Activated T-helper 2 cell treated with anti-CD3 and anti-CD28 coated beads, Interferon-gamma antibody, Interleukin-2, Interleukin-4, amounts not matched to agents 10 μg/mL and 5 μg/mL and 100 μg/mL, durations not matched to agents 14 hours and 24 hours and 36 hours (primary cell): ENCODE measurements at regions of chr4 and their contacts with region 1.

Region 1: DNA sequence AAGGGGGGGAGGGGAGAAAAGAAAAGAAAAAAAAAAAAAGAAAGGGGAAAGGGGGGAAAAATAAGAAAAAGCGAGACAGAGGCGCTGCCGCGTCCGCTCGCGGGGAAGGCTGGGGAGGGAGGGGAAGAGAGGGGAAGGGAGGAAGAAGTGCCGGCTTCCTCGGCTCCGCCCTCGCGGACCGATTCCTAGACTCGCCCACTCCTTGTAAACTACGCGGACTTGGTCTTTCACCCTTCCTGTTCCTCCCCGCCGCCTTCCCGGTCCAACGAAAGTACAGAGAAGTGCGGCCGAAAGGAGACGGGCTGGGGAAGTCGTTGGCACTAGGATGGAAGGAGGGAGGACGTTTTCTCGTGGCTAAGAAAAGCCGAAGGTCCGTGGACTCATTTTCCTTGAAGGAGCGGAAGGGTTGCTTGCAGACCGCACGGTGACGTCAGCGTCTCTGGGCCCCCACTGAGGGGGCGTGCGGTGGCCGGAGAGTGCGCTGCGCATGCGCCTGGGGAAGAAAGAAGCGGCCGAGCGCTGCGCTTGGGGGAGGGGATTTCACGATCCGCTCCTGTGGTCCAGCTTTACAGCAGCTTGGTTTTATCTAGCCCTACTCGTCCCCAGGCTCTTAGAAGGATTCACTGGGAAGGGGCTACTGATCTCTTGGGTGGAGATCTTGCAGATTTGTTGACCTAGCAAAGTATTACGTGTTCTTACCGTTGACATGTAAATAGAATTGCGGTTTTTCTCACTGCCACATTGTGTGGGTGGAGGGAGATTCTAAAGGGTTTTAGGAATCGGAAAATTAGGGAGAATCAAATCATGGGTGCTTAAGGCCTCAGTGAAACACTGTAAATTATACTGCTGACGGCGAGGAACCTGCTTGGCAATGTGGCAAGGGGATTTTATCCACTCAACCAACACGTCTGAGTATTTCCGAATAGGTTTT is at the start of gene CCNI:
- DNase-seq: peak; percentile 92
- H3K4me3 Mint-ChIP-seq: peak within 1 kb of the TSS; percentile 94
- H3K27ac Mint-ChIP-seq: peak within 1 kb of the TSS; percentile 100
- H3K4me1 Mint-ChIP-seq: peaks cover 38% of the 10 kb centered on the region
- H3K27me3 Mint-ChIP-seq: no peaks in the 10 kb centered on the region
- total RNA-seq, gene CCNI: 321 and 330 TPM in 2 replicates

Region 2: GRCh38 chr4:75673027-75673958 is 1402.8 kb before region 1 on chr4 and contains the start of gene G3BP2:
- intact Hi-C with region 1: loop called (anchors 5 kb)
- DNase-seq: peak; percentile 97
- H3K4me3 Mint-ChIP-seq: peak within 1 kb of the TSS; percentile 99
- H3K27ac Mint-ChIP-seq: peak within 1 kb of the TSS; percentile 99
- H3K4me1 Mint-ChIP-seq: peaks cover 40% of the 10 kb centered on the region
- H3K27me3 Mint-ChIP-seq: no peaks in the 10 kb centered on the region
- total RNA-seq, gene G3BP2: 143 and 156 TPM in 2 replicates

Region 3: GRCh38 chr4:77031544-77031943 is 44.6 kb before region 1 on chr4:
- intact Hi-C with region 1: loop called (anchors 1 kb)
- DNase-seq: no peak
- H3K4me3 Mint-ChIP-seq: no peak overlapping the region
- H3K27ac Mint-ChIP-seq: no peak overlapping the region
- H3K4me1 Mint-ChIP-seq: peaks cover 40% of the 10 kb centered on the region
- H3K27me3 Mint-ChIP-seq: peaks cover 47% of the 10 kb centered on the region

Region 4: DNA sequence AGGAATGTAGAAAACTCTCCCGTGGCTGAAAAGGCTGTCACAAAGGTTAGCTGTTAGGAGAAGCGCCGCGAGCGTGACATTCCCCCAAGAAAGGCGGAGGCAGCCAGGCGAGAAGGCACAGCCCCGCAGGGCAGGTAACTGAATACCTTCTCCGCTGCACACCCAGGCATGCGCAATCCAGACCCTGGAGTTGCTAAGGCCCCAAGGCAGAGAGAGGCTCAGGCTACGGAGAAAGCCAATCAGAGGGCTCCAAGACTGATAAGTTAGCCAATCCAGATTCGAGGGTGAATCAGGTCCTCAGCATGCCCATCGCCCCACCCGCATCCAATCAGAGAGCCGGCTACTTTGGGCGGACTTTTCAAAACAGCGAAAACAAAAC is 80.4 kb after region 1 on chr4:
- intact Hi-C with region 1: loop called (anchors 1 kb)
- DNase-seq: peak; percentile 97
- H3K4me3 Mint-ChIP-seq: peak overlapping the region; percentile 96
- H3K27ac Mint-ChIP-seq: peak overlapping the region; percentile 97
- H3K4me1 Mint-ChIP-seq: peaks cover 49% of the 10 kb centered on the region
- H3K27me3 Mint-ChIP-seq: no peaks in the 10 kb centered on the region

Region 5: GRCh38 chr4:77203380-77204197 is 127.5 kb after region 1 on chr4:
- intact Hi-C with region 1: loop called (anchors 1 kb)
- DNase-seq: peak; percentile 55
- H3K4me3 Mint-ChIP-seq: no peak overlapping the region
- H3K27ac Mint-ChIP-seq: no peak overlapping the region
- H3K4me1 Mint-ChIP-seq: peaks cover 21% of the 10 kb centered on the region
- H3K27me3 Mint-ChIP-seq: peaks cover 16% of the 10 kb centered on the region